Mammary epithelial cell (primary cell): ENCODE measurements at regions of chr12 and their contacts with region 1.

Region 1: GRCh38 chr12:52522346-52523011 is 2.3 kb upstream of the KRT5 start:
- DNase-seq: peak; percentile 97
- H3K4me3 ChIP-seq: peak overlapping the region; percentile 1 to 32 (median 16)
- H3K27ac ChIP-seq: peak overlapping the region; percentile 99
- H3K4me1 ChIP-seq: peaks cover 61% of the 10 kb centered on the region
- H3K27me3 ChIP-seq: no peaks in the 10 kb centered on the region
- CTCF ChIP-seq: no peak

Region 2: DNA sequence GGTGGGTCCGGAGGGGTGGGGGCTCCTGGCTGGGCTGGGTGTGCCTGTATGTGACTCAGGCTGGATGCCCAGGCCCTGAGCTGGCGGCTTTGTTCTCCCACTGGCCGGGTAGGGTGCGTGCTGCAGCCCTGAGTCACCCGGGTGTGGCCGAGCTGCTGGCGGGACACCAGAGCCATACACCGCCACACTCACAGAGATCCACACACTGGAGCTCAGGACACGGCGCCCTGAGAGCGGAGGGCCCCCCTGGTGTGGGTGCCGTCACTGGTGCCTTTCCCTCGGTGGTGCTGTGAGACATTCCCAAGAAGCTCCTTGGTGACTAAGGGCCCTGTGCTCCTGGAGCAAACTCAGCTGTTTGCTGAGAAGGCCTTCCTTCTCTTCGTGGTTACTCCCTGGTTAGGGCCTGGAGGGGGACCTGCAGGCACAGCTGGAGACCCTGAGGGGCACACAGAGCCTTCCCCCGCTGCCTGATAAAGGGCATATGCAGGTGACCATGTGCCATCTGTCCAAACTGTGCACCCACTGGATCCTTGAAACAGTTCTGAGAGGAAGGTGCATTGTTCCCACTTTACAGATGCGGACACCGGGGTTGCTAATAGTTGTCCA is 375.0 kb before region 1 on chr12:
- CTCF ChIA-PET with region 1: no interaction called
- dilution Hi-C with region 1: no loop called
- in situ Hi-C with region 1: loop called (anchors 5 to 10 kb)
- intact Hi-C with region 1: loop called (anchors 1 kb)
- DNase-seq: peak; percentile 99
- H3K4me3 ChIP-seq: no peak overlapping the region
- H3K27ac ChIP-seq: peak overlapping the region; percentile 100
- H3K4me1 ChIP-seq: peaks cover 89% of the 10 kb centered on the region
- H3K27me3 ChIP-seq: no peaks in the 10 kb centered on the region
- CTCF ChIP-seq: no peak

Region 3: DNA sequence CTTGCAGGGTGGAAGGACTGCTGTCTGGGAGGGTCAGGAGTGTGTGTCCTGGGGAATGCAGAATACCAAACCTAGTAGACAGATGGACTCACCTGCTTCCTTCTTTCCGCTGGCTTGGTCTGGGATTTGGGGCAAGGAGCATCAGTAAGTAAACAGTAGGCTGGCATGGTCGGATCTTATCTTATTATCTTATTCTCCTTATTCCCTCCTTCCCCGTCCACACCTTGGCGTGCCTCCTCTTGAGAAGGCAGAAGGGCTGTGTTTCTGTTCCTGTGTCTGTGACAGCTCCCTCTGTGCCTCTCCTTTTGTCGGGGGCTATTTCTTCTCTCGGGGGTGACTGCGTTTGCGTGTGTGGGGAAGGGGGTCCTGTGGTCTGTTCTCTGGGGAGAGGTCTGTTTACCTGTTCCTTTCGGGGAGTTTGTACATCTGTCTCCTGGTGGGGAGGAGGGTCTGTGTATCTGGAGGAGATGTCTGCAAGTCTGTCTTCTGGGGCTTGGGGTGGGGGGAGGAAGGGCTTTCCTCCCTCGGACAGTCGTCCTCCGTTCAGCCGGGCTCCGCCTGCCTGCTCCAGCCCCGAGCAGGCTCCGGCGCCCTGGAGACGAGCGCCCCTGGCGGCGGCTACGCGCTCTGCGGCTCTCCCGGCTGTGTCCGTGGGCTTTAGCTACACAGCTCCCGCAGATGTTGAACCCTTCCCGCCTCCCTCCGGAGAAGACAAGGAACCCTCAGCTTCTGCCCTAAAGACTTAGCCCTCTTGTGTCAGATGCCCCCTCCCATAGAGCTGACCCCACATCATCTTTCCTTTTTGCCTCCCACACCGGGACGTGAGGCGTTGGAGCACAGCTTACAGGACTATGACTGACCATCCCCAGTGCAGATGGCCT is 243.7 kb before region 1 on chr12:
- CTCF ChIA-PET with region 1: no interaction called
- dilution Hi-C with region 1: no loop called
- in situ Hi-C with region 1: no loop called
- intact Hi-C with region 1: loop called (anchors 2 kb)
- DNase-seq: peak; percentile 73
- H3K4me3 ChIP-seq: peak overlapping the region in 1 of 3 experiments; percentile 20
- H3K27ac ChIP-seq: peak overlapping the region; percentile 100
- H3K4me1 ChIP-seq: peaks cover 45% of the 10 kb centered on the region
- H3K27me3 ChIP-seq: no peaks in the 10 kb centered on the region
- CTCF ChIP-seq: peak; percentile 76 to 100

Region 4: GRCh38 chr12:52454411-52455216 is 67.9 kb before region 1 on chr12:
- CTCF ChIA-PET with region 1: no interaction called
- dilution Hi-C with region 1: no loop called
- in situ Hi-C with region 1: no loop called
- intact Hi-C with region 1: loop called (anchors 1 kb)
- DNase-seq: peak; percentile 82
- H3K4me3 ChIP-seq: no peak overlapping the region
- H3K27ac ChIP-seq: peak overlapping the region; percentile 85
- H3K4me1 ChIP-seq: peaks cover 36% of the 10 kb centered on the region
- H3K27me3 ChIP-seq: no peaks in the 10 kb centered on the region
- CTCF ChIP-seq: no peak

Region 5: DNA sequence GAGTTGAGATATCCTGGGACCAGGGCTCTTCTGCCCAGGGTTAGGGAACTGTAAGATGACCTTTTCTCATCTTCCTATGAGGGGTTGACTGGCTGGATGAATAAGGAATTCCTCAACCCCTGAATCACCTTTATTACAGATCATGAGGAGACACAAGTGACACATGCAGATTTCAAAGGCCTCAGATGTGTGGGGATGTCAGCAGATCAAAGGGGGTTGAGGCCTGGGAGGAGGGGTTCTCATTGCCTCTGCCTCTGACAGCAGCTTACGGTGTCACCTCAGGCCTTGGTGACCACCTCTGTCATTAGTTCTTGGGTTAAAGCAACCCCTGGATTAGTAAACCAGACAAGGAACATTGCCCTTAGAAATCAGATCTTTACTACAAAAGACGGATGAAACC is 80.8 kb after region 1 on chr12:
- CTCF ChIA-PET with region 1: no interaction called
- dilution Hi-C with region 1: no loop called
- in situ Hi-C with region 1: no loop called
- intact Hi-C with region 1: no loop called
- DNase-seq: no peak
- H3K4me3 ChIP-seq: no peak overlapping the region
- H3K27ac ChIP-seq: no peak overlapping the region
- H3K4me1 ChIP-seq: no peaks in the 10 kb centered on the region
- H3K27me3 ChIP-seq: peaks cover 12% of the 10 kb centered on the region
- CTCF ChIP-seq: no peak

Region 6: GRCh38 chr12:52650520-52651081 is 128.1 kb after region 1 on chr12:
- CTCF ChIA-PET with region 1: no interaction called
- dilution Hi-C with region 1: no loop called
- in situ Hi-C with region 1: no loop called
- intact Hi-C with region 1: no loop called
- DNase-seq: no peak
- H3K4me3 ChIP-seq: no peak overlapping the region
- H3K27ac ChIP-seq: no peak overlapping the region
- H3K4me1 ChIP-seq: peaks cover 6% of the 10 kb centered on the region
- H3K27me3 ChIP-seq: peaks cover 2% of the 10 kb centered on the region
- CTCF ChIP-seq: no peak

Region 7: GRCh38 chr12:52799062-52799761 is 276.7 kb after region 1 on chr12:
- CTCF ChIA-PET with region 1: no interaction called
- dilution Hi-C with region 1: no loop called
- in situ Hi-C with region 1: no loop called
- intact Hi-C with region 1: loop called (anchors 5 kb)
- DNase-seq: peak; percentile 74
- H3K4me3 ChIP-seq: no peak overlapping the region
- H3K27ac ChIP-seq: no peak overlapping the region
- H3K4me1 ChIP-seq: peaks cover 34% of the 10 kb centered on the region
- H3K27me3 ChIP-seq: no peaks in the 10 kb centered on the region
- CTCF ChIP-seq: no peak

Region 8: DNA sequence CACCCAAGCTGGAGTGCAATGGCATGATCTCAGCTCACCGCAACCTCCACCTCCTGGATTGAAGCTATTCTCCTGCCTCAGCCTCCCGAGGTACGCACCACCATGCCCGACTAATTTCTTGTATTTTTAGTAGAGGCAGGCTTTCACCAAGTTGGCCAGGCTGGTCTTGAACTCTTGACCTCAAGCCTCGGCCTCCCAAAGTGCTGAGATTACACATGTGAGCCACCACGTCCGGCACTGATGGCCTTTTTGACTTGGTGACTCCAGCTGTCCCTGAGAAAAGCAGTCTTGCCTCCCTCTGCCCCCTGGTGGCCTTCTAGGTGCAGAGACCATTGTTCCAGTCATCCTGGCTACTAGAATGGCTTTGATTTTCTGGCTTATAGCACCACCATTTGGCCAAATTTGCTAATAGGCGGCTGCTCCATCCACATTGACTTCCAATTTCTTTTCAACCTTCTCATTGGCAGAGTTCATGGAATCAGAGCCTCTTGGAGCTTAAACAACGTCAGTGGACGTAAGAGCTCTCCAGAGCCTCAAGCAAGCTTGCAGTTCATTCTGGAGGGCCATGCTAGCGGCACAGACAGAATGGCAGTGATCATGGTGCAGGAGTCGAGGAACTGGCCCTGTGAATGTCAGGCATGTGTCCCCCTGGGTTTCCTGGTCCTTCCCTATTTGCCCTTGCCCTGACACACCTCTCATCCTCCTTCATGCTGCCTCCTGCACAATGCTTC is 458.4 kb after region 1 on chr12:
- CTCF ChIA-PET with region 1: no interaction called
- dilution Hi-C with region 1: no loop called
- in situ Hi-C with region 1: no loop called
- intact Hi-C with region 1: loop called (anchors 10 kb)
- DNase-seq: peak; percentile 80
- H3K4me3 ChIP-seq: no peak overlapping the region
- H3K27ac ChIP-seq: no peak overlapping the region
- H3K4me1 ChIP-seq: no peaks in the 10 kb centered on the region
- H3K27me3 ChIP-seq: no peaks in the 10 kb centered on the region
- CTCF ChIP-seq: peak; percentile 99